Pancreas (tissue), 10 donors: ENCODE measurements at regions of chr1 and their contacts with region 1.

Region 1: GRCh38 chr1:225474986-225475820 is 47.4 kb upstream of the LBR start:
- DNase-seq: peak; percentile 40 to 91 (median 80)
- ATAC-seq: peak; percentile 88 to 99 (median 98)
- H3K4me3 ChIP-seq: no peak overlapping the region
- H3K27ac ChIP-seq: no peak overlapping the region
- H3K4me1 ChIP-seq: no peaks in the 10 kb centered on the region
- H3K27me3 ChIP-seq: no peaks in the 10 kb centered on the region
- CTCF ChIP-seq: peak; percentile 100

Region 2: GRCh38 chr1:225097175-225097574 is 378.0 kb before region 1 on chr1:
- intact Hi-C with region 1: no loop called
- DNase-seq: no peak
- ATAC-seq: no peak
- H3K4me3 ChIP-seq: no peak overlapping the region
- H3K27ac ChIP-seq: no peak overlapping the region
- H3K4me1 ChIP-seq: no peaks in the 10 kb centered on the region
- H3K27me3 ChIP-seq: no peaks in the 10 kb centered on the region
- CTCF ChIP-seq: no peak

Region 3: GRCh38 chr1:225228841-225229303 is 246.3 kb before region 1 on chr1:
- intact Hi-C with region 1: no loop called
- DNase-seq: no peak
- ATAC-seq: no peak
- H3K4me3 ChIP-seq: no peak overlapping the region
- H3K27ac ChIP-seq: no peak overlapping the region
- H3K4me1 ChIP-seq: no peaks in the 10 kb centered on the region
- H3K27me3 ChIP-seq: no peaks in the 10 kb centered on the region
- CTCF ChIP-seq: no peak

Region 4: GRCh38 chr1:225754940-225755641 is 279.9 kb after region 1 on chr1:
- intact Hi-C with region 1: no loop called
- DNase-seq: peak in 3 of 6 donors; percentile 47 to 56 (median 51)
- ATAC-seq: peak; percentile 53 to 83 (median 67)
- H3K4me3 ChIP-seq: no peak overlapping the region
- H3K27ac ChIP-seq: peak overlapping the region in 3 of 4 donors; percentile 12 to 50 (median 31)
- H3K4me1 ChIP-seq: peaks cover 8 to 20% (median 8%) of the 10 kb centered on the region in 3 donors
- H3K27me3 ChIP-seq: no peaks in the 10 kb centered on the region
- CTCF ChIP-seq: no peak

Region 5: GRCh38 chr1:225911191-225912130 is 436.3 kb after region 1 on chr1:
- intact Hi-C with region 1: loop called in 1 of 3 experiments (anchors 5 kb)
- DNase-seq: peak in 5 of 6 donors; percentile 54 to 91 (median 81)
- ATAC-seq: peak; percentile 91 to 93 (median 92)
- H3K4me3 ChIP-seq: peak overlapping the region in 1 of 4 donors; percentile 21
- H3K27ac ChIP-seq: peak overlapping the region in 2 of 4 donors; percentile 17 to 26
- H3K4me1 ChIP-seq: peaks cover 0 to 5% (median 0%) of the 10 kb centered on the region in 3 donors
- H3K27me3 ChIP-seq: no peaks in the 10 kb centered on the region
- CTCF ChIP-seq: peak; percentile 90 to 98 (median 94)

Region 6: GRCh38 chr1:225977937-225978748 is 502.9 kb after region 1 on chr1:
- intact Hi-C with region 1: loop called (anchors 5 to 10 kb)
- DNase-seq: peak in 2 of 6 donors; percentile 50 to 53
- ATAC-seq: peak; percentile 12 to 46 (median 36)
- H3K4me3 ChIP-seq: no peak overlapping the region
- H3K27ac ChIP-seq: no peak overlapping the region
- H3K4me1 ChIP-seq: peaks cover 12 to 33% (median 17%) of the 10 kb centered on the region in 3 donors
- H3K27me3 ChIP-seq: no peaks in the 10 kb centered on the region
- CTCF ChIP-seq: no peak